Activated naive CD4-positive, alpha-beta T cell treated with anti-CD3 and anti-CD28 coated beads for 36 hours (primary cell): ENCODE measurements at regions of chr12 and their contacts with region 1.

Region 1: GRCh38 chr12:108691175-108691997 is 39.9 kb downstream of the CORO1C start:
- DNase-seq: peak; percentile 92
- H3K4me3 Mint-ChIP-seq: peak overlapping the region; percentile 55
- H3K27ac Mint-ChIP-seq: peak overlapping the region; percentile 80
- H3K4me1 Mint-ChIP-seq: peaks cover 77% of the 10 kb centered on the region
- H3K27me3 Mint-ChIP-seq: peaks cover 2% of the 10 kb centered on the region

Region 2: DNA sequence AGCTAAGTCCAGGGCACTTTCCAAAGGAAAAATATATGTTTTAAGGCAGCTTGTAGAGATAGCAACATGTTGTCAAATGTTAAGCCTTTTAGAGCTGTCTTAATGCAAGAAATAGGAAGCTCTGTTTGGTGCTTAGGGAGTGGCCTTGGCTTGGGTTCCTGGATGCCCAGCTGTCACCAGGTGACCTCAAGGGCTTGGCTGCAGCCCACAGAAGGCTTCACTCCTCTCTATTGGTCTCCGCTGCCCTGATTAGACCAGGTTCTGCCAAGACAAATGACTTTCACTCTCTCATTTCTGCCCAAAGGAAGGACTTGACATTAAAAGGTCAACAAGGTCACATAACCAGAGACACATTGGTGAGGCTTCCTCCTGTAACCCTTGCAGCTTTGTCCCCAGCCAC is 485.5 kb before region 1 on chr12:
- CTCF ChIA-PET with region 1: no interaction called
- intact Hi-C with region 1: no loop called
- DNase-seq: no peak
- H3K4me3 Mint-ChIP-seq: no peak overlapping the region
- H3K27ac Mint-ChIP-seq: no peak overlapping the region
- H3K4me1 Mint-ChIP-seq: no peaks in the 10 kb centered on the region
- H3K27me3 Mint-ChIP-seq: peaks cover 13% of the 10 kb centered on the region

Region 3: GRCh38 chr12:108568338-108569154 is 122.8 kb before region 1 on chr12:
- CTCF ChIA-PET with region 1: interaction called, 5 read pairs
- intact Hi-C with region 1: loop called (anchors 1 kb)
- DNase-seq: peak; percentile 89
- H3K4me3 Mint-ChIP-seq: peak overlapping the region; percentile 30
- H3K27ac Mint-ChIP-seq: peak overlapping the region; percentile 91
- H3K4me1 Mint-ChIP-seq: peaks cover 90% of the 10 kb centered on the region
- H3K27me3 Mint-ChIP-seq: no peaks in the 10 kb centered on the region

Region 4: GRCh38 chr12:108653082-108653516 is 38.3 kb before region 1 on chr12:
- CTCF ChIA-PET with region 1: no interaction called
- intact Hi-C with region 1: no loop called
- DNase-seq: no peak
- H3K4me3 Mint-ChIP-seq: no peak overlapping the region
- H3K27ac Mint-ChIP-seq: no peak overlapping the region
- H3K4me1 Mint-ChIP-seq: peaks cover 26% of the 10 kb centered on the region
- H3K27me3 Mint-ChIP-seq: no peaks in the 10 kb centered on the region

Region 5: GRCh38 chr12:108731105-108731865 is 39.9 kb after region 1 on chr12 and contains the start of gene CORO1C:
- CTCF ChIA-PET with region 1: interaction called, 5 read pairs
- intact Hi-C with region 1: loop called (anchors 1 kb)
- DNase-seq: peak; percentile 96
- H3K4me3 Mint-ChIP-seq: peak within 1 kb of the TSS; percentile 89
- H3K27ac Mint-ChIP-seq: peak within 1 kb of the TSS; percentile 87
- H3K4me1 Mint-ChIP-seq: peaks cover 29% of the 10 kb centered on the region
- H3K27me3 Mint-ChIP-seq: no peaks in the 10 kb centered on the region
- total RNA-seq, gene CORO1C: 36.4 to 43.7 TPM

Region 6: DNA sequence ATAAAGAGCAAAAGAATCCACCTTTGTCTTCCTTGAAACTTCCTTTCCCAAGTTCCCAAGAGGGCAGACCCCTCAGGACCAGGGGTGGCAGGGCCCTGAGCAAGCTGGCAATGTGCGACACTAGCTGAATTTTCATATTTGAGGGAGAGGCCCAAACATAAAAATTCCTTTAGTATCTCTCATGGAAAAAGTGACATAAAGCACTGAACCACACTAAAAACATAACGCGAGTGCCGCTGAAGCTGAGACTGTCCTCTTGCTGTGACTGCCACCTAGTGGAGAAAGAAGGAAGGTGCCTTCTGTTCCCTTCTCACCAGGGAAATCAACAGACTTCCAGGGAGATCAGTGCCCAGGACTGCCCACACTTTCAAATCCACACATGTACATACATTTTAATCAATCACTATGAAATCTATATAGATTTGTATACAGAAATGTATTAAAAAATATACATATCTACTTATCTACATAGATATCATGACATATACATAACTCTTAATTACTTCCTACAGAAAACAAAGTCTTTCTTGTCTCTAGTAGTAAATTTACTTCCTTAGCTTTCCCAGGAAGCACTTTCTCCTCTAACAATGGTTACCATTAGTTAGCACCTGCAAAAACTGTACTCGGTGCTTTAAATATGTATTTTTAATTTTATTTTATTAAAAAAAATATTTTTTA is 112.2 kb after region 1 on chr12:
- CTCF ChIA-PET with region 1: interaction called, 12 read pairs
- intact Hi-C with region 1: loop called (anchors 1 kb)
- DNase-seq: peak; percentile 83
- H3K4me3 Mint-ChIP-seq: no peak overlapping the region
- H3K27ac Mint-ChIP-seq: peak overlapping the region; percentile 76
- H3K4me1 Mint-ChIP-seq: peaks cover 7% of the 10 kb centered on the region
- H3K27me3 Mint-ChIP-seq: no peaks in the 10 kb centered on the region

Region 7: DNA sequence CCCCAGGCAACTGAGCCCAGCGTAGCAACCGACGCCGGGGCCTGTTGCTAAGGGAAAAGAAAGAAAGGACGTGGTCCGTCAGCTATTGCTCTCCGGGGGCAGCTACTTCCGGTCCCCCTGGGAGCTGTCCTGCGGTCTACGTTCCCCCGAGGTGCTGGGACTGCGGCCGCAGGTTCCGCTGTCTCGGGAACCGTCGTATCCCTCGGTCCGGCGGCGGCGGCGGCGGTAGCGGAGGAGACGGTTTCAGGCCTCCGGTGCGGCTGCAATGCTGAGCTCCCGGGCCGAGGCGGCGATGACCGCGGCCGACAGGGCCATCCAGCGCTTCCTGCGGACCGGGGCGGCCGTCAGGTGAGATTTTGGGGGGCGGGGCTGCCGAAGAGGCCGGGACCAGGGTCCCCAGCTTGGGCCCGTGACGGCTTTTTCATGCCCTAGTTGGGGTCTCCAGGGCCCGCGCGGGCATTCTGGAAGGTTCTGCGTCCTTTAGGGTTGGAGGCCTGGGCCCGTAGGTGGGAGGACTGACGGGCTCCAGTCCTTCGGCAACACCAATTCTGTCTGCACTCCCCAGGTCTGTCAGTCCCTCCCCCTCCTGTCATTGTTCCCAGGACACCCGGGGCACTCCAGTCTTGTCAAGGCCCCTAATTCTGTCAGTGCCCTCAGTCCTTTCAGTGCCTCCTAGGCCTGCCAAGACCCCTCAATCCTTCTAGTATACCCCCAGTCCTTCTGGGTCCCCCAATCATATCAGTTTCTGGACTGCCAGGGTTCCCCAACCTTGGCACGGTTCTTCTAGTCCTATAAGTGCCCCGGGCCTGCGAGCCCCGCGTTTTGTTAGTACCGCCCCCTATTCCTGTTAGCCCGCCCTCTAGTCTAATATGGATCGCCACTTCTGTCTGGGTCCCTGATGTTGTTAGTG is 361.3 kb after region 1 on chr12 and contains the start of gene USP30:
- CTCF ChIA-PET with region 1: no interaction called
- intact Hi-C with region 1: loop called (anchors 2 kb)
- DNase-seq: peak; percentile 87
- H3K4me3 Mint-ChIP-seq: peak within 1 kb of the TSS; percentile 84
- H3K27ac Mint-ChIP-seq: peak within 1 kb of the TSS; percentile 96
- H3K4me1 Mint-ChIP-seq: peaks cover 8% of the 10 kb centered on the region
- H3K27me3 Mint-ChIP-seq: no peaks in the 10 kb centered on the region
- total RNA-seq, gene USP30: 11.0 to 11.5 TPM

Region 8: GRCh38 chr12:109987615-109988014 is 1296.2 kb after region 1 on chr12:
- CTCF ChIA-PET with region 1: no interaction called
- intact Hi-C with region 1: loop called (anchors 5 kb)
- DNase-seq: peak; percentile 69
- H3K4me3 Mint-ChIP-seq: no peak overlapping the region
- H3K27ac Mint-ChIP-seq: peak overlapping the region; percentile 84
- H3K4me1 Mint-ChIP-seq: peaks cover 61% of the 10 kb centered on the region
- H3K27me3 Mint-ChIP-seq: no peaks in the 10 kb centered on the region